ENCODE measurements at regions of chr12 and their contacts with region 1.

Region 1: GRCh38 chr12:14803011-14803829 is at the starts of genes C12orf60 and WBP11:
- DNase-seq: peak; percentile 99
- H3K4me3 Mint-ChIP-seq: no peak within 1 kb of the TSS
- H3K27ac Mint-ChIP-seq: no peak within 1 kb of the TSS
- H3K4me1 Mint-ChIP-seq: peaks cover 9% of the 10 kb centered on the region
- H3K27me3 Mint-ChIP-seq: no peaks in the 10 kb centered on the region
- CTCF ChIP-seq: no peak
- total RNA-seq, gene C12orf60: 2.2 and 2.6 TPM in 2 replicates
- total RNA-seq, gene WBP11: 51.3 and 56.6 TPM in 2 replicates

Region 2: DNA sequence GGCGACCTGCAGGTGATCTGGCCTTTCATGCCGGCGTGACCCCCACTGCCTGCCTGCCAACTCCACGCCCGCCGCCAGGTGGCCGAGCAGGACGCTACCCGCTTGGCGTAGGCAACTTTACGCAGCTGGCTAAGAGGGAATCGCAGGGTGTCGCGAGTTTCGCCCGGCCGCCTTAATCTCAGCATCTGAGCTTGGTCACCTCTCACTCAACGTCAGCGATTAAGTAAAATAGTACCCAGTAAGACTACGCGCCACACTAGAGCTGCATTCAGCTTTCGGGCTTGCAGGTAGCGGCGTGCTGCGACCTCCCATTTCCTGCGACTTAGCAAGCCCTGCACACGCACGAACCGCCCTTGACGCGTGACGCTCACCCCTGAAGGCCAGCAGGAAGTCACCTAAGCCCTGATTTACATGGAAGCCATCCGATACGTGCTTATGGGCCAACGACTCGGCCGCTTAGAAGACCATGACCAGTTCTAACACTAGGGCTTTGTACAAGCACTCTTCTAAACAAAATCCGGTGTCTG is 33.2 kb before region 1 on chr12:
- CTCF ChIA-PET with region 1: interaction called, 7 read pairs
- POLR2A ChIA-PET with region 1: interaction called, 285 read pairs
- intact Hi-C with region 1: loop called (anchors 1 kb)
- DNase-seq: peak; percentile 81
- H3K4me3 Mint-ChIP-seq: peak overlapping the region; percentile 98
- H3K27ac Mint-ChIP-seq: peak overlapping the region; percentile 98
- H3K4me1 Mint-ChIP-seq: peaks cover 11% of the 10 kb centered on the region
- H3K27me3 Mint-ChIP-seq: no peaks in the 10 kb centered on the region
- CTCF ChIP-seq: peak; percentile 62

Region 3: DNA sequence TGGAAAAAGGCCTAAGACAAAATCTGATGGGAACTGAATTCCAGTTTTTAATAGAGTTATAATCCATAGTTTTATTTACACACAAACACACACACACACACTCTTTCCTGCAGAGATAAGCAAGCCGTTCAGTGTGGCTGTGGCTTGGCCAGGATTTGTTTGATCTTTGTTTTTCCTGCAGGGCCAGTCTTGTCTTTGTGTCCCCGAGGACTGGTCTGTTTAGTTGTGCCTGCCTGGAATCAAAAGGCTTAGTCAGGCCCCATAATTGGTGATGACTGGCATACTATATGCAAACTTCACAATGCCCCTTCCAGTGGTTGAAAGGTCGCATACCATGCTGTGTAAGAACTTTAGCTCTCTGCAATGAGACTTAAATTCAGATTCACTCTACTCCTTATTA is 26.0 kb before region 1 on chr12:
- CTCF ChIA-PET with region 1: interaction called, 7 read pairs
- POLR2A ChIA-PET with region 1: interaction called, 285 read pairs
- intact Hi-C with region 1: loop called (anchors 1 kb)
- DNase-seq: no peak
- H3K4me3 Mint-ChIP-seq: peak overlapping the region; percentile 97
- H3K27ac Mint-ChIP-seq: peak overlapping the region; percentile 99
- H3K4me1 Mint-ChIP-seq: peaks cover 17% of the 10 kb centered on the region
- H3K27me3 Mint-ChIP-seq: no peaks in the 10 kb centered on the region
- CTCF ChIP-seq: no peak

Region 4: GRCh38 chr12:14782756-14783155 is 20.5 kb before region 1 on chr12:
- CTCF ChIA-PET with region 1: interaction called, 6 read pairs
- POLR2A ChIA-PET with region 1: interaction called, 27 read pairs
- intact Hi-C with region 1: no loop called
- DNase-seq: no peak
- H3K4me3 Mint-ChIP-seq: no peak overlapping the region
- H3K27ac Mint-ChIP-seq: no peak overlapping the region
- H3K4me1 Mint-ChIP-seq: no peaks in the 10 kb centered on the region
- H3K27me3 Mint-ChIP-seq: no peaks in the 10 kb centered on the region
- CTCF ChIP-seq: no peak

Region 5: DNA sequence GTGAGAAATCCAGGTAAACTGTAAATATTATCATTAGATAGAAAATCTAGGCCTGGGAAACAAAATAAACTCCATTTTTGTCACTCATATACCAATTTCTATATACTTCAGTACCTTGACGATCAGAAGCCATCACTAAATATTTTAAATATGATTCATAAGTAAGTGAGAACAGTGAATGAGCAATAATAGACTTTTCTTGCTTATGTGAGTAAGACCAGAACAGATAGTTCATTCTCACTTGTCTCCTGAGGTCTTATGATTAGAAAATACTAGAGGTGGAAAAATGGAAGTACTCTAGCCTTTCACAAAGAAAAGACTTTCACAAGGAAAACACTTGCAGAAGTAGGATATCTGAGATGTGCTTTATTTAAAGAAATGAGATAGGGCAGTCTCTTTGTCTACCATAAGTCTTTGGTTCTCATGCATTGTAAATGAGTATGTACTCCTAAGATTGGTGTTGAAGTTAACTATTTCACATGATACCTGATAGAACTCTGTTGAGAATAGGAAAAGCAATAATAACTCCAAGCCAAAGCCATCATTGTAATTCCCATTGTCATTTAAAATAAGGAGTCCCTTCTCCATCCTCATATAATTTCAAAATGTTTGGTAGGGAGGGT is 20.9 kb after region 1 on chr12:
- CTCF ChIA-PET with region 1: no interaction called
- POLR2A ChIA-PET with region 1: interaction called, 19 read pairs
- intact Hi-C with region 1: loop called (anchors 2 kb)
- DNase-seq: no peak
- H3K4me3 Mint-ChIP-seq: no peak overlapping the region
- H3K27ac Mint-ChIP-seq: peak overlapping the region; percentile 67
- H3K4me1 Mint-ChIP-seq: peaks cover 19% of the 10 kb centered on the region
- H3K27me3 Mint-ChIP-seq: no peaks in the 10 kb centered on the region
- CTCF ChIP-seq: no peak

Region 6: DNA sequence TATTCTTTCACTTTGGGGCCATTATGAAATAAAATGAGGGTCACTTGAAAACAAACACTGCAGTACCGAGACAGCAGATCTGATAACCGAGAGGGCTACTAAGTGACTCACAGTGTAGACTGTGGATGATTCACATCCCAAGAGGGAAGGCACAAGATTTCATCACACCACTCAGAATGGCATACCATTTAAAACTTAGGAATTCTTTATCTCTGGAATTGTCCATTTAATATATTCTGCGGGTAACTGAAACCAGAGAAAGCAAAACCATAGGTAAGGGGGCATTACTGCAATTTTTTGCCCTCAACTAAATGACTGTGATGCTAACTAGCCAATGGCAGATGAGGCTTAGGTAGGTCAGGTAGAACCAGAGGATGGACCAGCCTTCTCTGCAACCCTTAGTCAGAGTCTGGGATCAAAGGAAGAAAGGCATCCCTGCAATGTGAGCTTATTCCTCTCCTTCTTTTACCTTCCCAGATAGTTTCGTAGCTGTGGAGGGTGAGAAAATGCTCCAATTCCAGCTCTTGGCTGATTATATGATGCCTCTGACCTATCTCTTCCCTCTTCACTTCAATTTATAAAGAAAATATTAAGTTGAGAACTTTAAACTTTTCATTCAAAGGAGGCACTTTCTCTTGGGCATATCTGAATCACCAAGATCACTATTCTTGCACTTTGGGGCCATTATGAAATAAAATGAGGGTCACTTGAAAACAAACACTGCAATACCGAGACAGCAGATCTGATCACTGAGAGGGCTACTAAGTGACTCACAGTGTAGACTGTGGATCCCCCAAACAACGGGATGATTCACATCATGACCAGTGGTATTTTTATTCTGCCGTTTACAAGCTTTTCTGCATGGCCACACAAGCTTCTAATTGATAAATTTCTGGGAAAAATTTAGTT is 33.3 kb after region 1 on chr12:
- CTCF ChIA-PET with region 1: interaction called, 4 read pairs
- POLR2A ChIA-PET with region 1: interaction called, 14 read pairs
- intact Hi-C with region 1: loop called (anchors 2 kb)
- DNase-seq: peak; percentile 88
- H3K4me3 Mint-ChIP-seq: peak overlapping the region; percentile 65
- H3K27ac Mint-ChIP-seq: peak overlapping the region; percentile 89
- H3K4me1 Mint-ChIP-seq: peaks cover 39% of the 10 kb centered on the region
- H3K27me3 Mint-ChIP-seq: no peaks in the 10 kb centered on the region
- CTCF ChIP-seq: no peak

Region 7: GRCh38 chr12:14845350-14845750 is 42.1 kb after region 1 on chr12:
- CTCF ChIA-PET with region 1: interaction called, 6 read pairs
- POLR2A ChIA-PET with region 1: interaction called, 14 read pairs
- intact Hi-C with region 1: no loop called
- DNase-seq: peak; percentile 74
- H3K4me3 Mint-ChIP-seq: no peak overlapping the region
- H3K27ac Mint-ChIP-seq: peak overlapping the region; percentile 78
- H3K4me1 Mint-ChIP-seq: peaks cover 23% of the 10 kb centered on the region
- H3K27me3 Mint-ChIP-seq: no peaks in the 10 kb centered on the region
- CTCF ChIP-seq: peak; percentile 68